ENCODE measurements at regions of chr14 and their contacts with region 1.

Region 1: DNA sequence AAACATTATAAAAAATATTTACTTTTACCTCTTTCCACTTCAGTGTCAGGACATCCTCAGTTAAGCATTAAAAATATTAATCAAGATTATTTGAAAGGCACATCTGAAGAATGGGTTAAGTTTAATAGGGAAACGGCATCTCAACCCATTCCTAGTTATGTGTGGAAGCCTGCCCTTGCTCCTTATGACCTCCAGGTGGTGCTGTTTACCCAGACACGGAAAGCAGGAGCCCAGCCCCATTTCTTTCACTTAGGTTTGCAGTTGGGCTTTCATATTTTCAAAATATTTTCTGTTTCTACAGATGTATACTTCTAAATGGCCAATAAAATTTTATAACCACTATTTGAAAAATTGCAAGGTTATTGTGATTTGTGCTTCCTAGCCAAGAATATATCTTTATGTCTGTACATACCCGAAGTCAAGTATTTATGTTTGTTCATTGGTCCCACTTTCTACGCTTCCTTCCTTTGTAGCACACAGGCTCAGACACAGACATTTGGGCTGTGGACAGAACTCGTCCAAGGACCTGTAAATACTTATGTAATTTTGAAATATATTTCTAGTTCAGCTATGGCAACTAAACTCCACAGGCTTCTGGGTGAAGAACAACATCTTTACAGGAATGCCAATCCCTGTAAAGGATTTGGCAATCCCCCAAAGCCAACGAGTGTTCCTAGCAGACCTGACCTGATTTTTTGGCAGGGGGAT is 247.1 kb downstream of the AKAP6 start:
- DNase-seq: peak in 5 of 9 experiments; percentile 7 to 59 (median 24)
- ATAC-seq: peak; percentile 63
- H3K4me3 ChIP-seq: no peak overlapping the region
- H3K4me3 Mint-ChIP-seq: no peak overlapping the region
- H3K27ac ChIP-seq: no peak overlapping the region
- H3K27ac Mint-ChIP-seq: no peak overlapping the region
- H3K4me1 ChIP-seq: no peaks in the 10 kb centered on the region
- H3K4me1 Mint-ChIP-seq: no peaks in the 10 kb centered on the region
- H3K27me3 ChIP-seq: no peaks in the 10 kb centered on the region
- H3K27me3 Mint-ChIP-seq: no peaks in the 10 kb centered on the region
- CTCF ChIP-seq: peak; percentile 88

Region 2: DNA sequence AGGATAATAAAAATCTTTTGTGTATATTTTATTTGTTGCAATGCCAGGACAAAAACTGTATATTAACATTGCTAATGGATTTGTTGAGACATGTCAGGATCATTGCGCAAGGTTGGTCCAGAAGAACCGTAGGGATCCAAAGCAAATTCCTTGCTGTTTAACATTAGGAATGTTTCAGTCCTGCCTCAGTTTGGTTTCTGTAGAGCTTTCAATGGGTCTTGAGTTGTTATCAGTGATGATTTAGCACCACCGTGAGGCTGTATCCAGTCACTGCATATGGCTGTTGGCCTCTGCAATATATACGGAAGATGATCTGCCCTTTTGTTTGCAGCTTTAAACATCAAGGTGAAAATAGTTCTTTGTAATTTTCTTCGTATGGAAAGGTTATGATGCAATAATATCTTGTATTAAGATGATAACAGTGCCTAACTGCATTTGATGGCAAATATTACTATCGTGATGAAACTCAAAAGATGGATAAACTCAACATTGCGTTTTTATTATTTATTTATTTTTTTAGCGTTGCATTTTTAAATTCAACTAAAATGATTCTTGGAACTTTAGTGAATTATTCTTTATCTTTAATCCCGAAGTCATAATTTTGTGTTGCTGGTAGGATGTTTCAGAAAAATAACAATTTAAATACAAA is 15.9 kb before region 1 on chr14:
- CTCF ChIA-PET with region 1: interaction called, 15 read pairs
- POLR2A ChIA-PET with region 1: no interaction called
- intact Hi-C with region 1: no loop called
- DNase-seq: peak in 3 of 9 experiments; percentile 0 to 37 (median 18)
- ATAC-seq: no peak
- H3K4me3 ChIP-seq: no peak overlapping the region
- H3K4me3 Mint-ChIP-seq: no peak overlapping the region
- H3K27ac ChIP-seq: no peak overlapping the region
- H3K27ac Mint-ChIP-seq: no peak overlapping the region
- H3K4me1 ChIP-seq: no peaks in the 10 kb centered on the region
- H3K4me1 Mint-ChIP-seq: peaks cover 12% of the 10 kb centered on the region
- H3K27me3 ChIP-seq: no peaks in the 10 kb centered on the region
- H3K27me3 Mint-ChIP-seq: no peaks in the 10 kb centered on the region
- CTCF ChIP-seq: peak; percentile 50

Region 3: GRCh38 chr14:32702562-32702961 is 126.3 kb after region 1 on chr14:
- CTCF ChIA-PET with region 1: no interaction called
- POLR2A ChIA-PET with region 1: no interaction called
- intact Hi-C with region 1: no loop called
- DNase-seq: no peak
- ATAC-seq: no peak
- H3K4me3 ChIP-seq: no peak overlapping the region
- H3K4me3 Mint-ChIP-seq: no peak overlapping the region
- H3K27ac ChIP-seq: no peak overlapping the region
- H3K27ac Mint-ChIP-seq: no peak overlapping the region
- H3K4me1 ChIP-seq: no peaks in the 10 kb centered on the region
- H3K4me1 Mint-ChIP-seq: no peaks in the 10 kb centered on the region
- H3K27me3 ChIP-seq: no peaks in the 10 kb centered on the region
- H3K27me3 Mint-ChIP-seq: no peaks in the 10 kb centered on the region
- CTCF ChIP-seq: no peak

Region 4: DNA sequence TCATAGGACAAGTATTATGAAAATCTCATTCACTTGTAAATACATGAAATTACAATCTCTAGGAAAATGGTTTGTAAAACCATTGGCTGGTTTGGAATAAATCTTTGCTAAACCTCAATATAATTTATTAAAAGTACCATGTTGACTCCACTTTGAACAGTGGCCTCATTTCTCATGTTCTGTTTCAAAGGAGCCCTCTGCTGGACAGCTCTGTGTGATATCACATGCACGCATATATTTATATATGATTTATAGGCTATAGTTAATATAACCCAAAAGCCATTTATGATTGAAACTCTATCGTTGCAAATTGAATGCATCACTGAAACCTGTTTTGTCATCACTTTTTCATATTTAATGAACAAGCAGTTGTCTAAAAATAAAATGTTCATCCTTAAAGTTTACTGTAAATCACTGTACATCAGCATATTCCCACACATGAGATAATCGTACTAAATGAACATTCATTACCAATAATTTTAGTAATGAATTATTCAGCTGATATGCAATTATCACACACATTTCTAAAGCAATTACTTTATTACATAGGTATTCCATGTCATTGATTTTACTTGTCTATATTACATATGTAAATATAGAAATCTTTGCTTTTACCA is 856.3 kb after region 1 on chr14:
- CTCF ChIA-PET with region 1: interaction called, 3 read pairs
- POLR2A ChIA-PET with region 1: no interaction called
- intact Hi-C with region 1: loop called in 1 of 2 experiments (anchors 10 kb)
- DNase-seq: no peak
- ATAC-seq: no peak
- H3K4me3 ChIP-seq: no peak overlapping the region
- H3K4me3 Mint-ChIP-seq: no peak overlapping the region
- H3K27ac ChIP-seq: no peak overlapping the region
- H3K27ac Mint-ChIP-seq: no peak overlapping the region
- H3K4me1 ChIP-seq: no peaks in the 10 kb centered on the region
- H3K4me1 Mint-ChIP-seq: peaks cover 7% of the 10 kb centered on the region
- H3K27me3 ChIP-seq: no peaks in the 10 kb centered on the region
- H3K27me3 Mint-ChIP-seq: no peaks in the 10 kb centered on the region
- CTCF ChIP-seq: no peak

Region 5: DNA sequence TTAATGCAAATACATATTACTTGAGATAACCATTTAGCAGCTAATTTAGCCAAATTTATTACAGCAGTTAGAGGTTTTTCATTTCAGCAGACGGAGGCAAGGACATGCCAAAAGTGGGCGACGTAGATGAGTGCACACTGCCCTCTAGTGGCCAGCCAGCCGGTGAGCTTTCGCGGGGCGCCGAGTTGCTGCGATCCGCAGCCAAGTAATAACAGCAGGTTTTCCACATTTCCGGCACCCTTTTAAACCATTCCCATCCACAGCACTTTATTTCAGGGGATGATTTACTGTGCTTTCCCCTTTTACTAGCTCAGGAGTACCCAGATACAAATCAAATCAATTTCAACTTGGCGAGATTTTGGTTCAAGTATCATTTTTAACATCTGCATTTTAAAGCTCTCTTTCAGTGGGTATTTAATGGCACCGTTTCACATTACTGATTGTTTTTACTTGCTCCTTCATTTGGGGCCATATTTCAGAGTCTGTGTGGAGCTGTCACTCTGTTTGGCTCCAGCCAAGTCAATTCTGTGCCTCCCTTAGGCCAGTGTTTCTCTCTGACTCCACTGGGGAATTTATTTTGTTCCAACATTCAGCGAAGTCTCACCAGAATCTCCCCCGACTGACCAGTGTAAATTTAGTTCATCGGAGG is 1216.6 kb after region 1 on chr14:
- CTCF ChIA-PET with region 1: interaction called, 13 read pairs
- POLR2A ChIA-PET with region 1: no interaction called
- intact Hi-C with region 1: loop called in 1 of 2 experiments (anchors 1 kb)
- DNase-seq: peak; percentile 10 to 69 (median 57)
- ATAC-seq: no peak
- H3K4me3 ChIP-seq: no peak overlapping the region
- H3K4me3 Mint-ChIP-seq: peak overlapping the region; percentile 50
- H3K27ac ChIP-seq: no peak overlapping the region
- H3K27ac Mint-ChIP-seq: no peak overlapping the region
- H3K4me1 ChIP-seq: no peaks in the 10 kb centered on the region
- H3K4me1 Mint-ChIP-seq: peaks cover 12% of the 10 kb centered on the region
- H3K27me3 ChIP-seq: no peaks in the 10 kb centered on the region
- H3K27me3 Mint-ChIP-seq: peaks cover 45% of the 10 kb centered on the region
- CTCF ChIP-seq: peak; percentile 81

Region 6: GRCh38 chr14:34227834-34228649 is 1651.8 kb after region 1 on chr14:
- CTCF ChIA-PET with region 1: interaction called, 3 read pairs
- POLR2A ChIA-PET with region 1: no interaction called
- intact Hi-C with region 1: loop called (anchors 2 to 5 kb)
- DNase-seq: peak in 8 of 9 experiments; percentile 18 to 59 (median 43)
- ATAC-seq: no peak
- H3K4me3 ChIP-seq: no peak overlapping the region
- H3K4me3 Mint-ChIP-seq: no peak overlapping the region
- H3K27ac ChIP-seq: no peak overlapping the region
- H3K27ac Mint-ChIP-seq: no peak overlapping the region
- H3K4me1 ChIP-seq: no peaks in the 10 kb centered on the region
- H3K4me1 Mint-ChIP-seq: no peaks in the 10 kb centered on the region
- H3K27me3 ChIP-seq: no peaks in the 10 kb centered on the region
- H3K27me3 Mint-ChIP-seq: peaks cover 8% of the 10 kb centered on the region
- CTCF ChIP-seq: peak; percentile 44

Region 7: DNA sequence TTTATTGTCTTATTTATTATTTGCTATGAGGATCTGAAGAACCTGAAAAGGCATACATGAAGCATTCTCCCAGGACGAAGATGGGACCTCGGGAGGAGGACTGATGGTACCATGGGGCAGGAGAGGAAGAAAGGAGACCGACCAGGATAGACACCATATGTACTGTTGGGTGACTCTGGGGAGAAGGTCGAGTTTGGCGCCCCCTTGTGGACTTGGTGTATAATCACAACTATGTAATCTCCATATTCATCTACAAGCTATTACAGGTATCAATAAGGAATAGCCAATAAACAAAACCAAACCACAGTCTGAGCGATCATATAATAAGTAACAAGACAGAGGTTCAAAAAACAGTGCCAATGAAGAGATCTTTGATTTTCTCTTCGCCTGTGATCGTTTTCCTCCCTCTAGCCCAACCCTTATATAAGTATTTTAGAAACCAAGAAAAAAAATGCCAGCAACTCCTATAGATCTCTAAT is 1746.7 kb after region 1 on chr14:
- CTCF ChIA-PET with region 1: no interaction called
- POLR2A ChIA-PET with region 1: no interaction called
- intact Hi-C with region 1: loop called in 1 of 2 experiments (anchors 2 kb)
- DNase-seq: peak; percentile 37 to 78 (median 69)
- ATAC-seq: no peak
- H3K4me3 ChIP-seq: no peak overlapping the region
- H3K4me3 Mint-ChIP-seq: no peak overlapping the region
- H3K27ac ChIP-seq: no peak overlapping the region
- H3K27ac Mint-ChIP-seq: no peak overlapping the region
- H3K4me1 ChIP-seq: no peaks in the 10 kb centered on the region
- H3K4me1 Mint-ChIP-seq: no peaks in the 10 kb centered on the region
- H3K27me3 ChIP-seq: no peaks in the 10 kb centered on the region
- H3K27me3 Mint-ChIP-seq: peaks cover 3% of the 10 kb centered on the region
- CTCF ChIP-seq: peak; percentile 76

Measured in CD8-positive, alpha-beta T cell (primary cell).